Ovary (tissue), 10 donors: ENCODE measurements at regions of chr2 and their contacts with region 1.

Region 1: GRCh38 chr2:241466230-241466629 is 42.2 kb downstream of the STK25 start:
- DNase-seq: no peak
- H3K4me3 ChIP-seq: no peak overlapping the region
- H3K27ac ChIP-seq: no peak overlapping the region
- H3K4me1 ChIP-seq: no peaks in the 10 kb centered on the region
- H3K27me3 ChIP-seq: no peaks in the 10 kb centered on the region
- CTCF ChIP-seq: no peak
- EP300 ChIP-seq: no peak
- POLR2A ChIP-seq: no peak

Region 2: DNA sequence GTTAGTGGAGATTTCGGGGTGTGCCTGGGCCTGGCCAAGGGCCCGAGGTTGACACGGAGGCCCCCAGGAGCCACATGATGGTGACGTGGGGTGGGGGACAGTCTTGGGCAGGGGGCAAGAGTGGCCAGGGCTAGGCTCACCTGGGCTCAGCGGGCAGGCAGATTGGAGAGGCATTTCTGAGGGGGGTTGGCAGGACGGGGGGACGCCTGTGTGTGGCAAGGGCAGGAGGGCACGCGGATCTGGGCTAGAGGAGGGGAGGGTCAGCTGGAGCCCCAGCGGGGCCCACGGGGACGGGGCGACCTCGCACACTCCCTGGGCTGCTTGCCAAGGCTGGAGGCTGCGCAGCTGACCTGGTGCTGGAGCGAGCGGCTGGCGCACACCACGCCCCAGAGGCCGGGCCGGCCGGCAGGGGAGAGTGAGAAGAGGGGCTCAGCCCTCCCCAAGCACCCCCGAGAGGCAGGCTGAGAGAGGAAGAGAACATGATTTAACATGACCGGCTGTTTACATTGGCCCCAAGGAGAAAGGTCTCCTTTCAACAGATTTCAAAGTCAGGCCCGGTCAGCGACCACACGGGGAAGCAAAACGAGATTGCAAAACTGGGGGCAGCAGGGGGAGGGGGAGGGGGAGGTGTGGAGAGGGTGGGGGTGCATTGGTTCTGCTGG is 505.8 kb before region 1 on chr2:
- intact Hi-C with region 1: no loop called
- DNase-seq: peak; percentile 88 to 96 (median 94)
- H3K4me3 ChIP-seq: no peak overlapping the region
- H3K27ac ChIP-seq: peak overlapping the region; percentile 53 to 83
- H3K4me1 ChIP-seq: peaks cover 35% of the 10 kb centered on the region
- H3K27me3 ChIP-seq: no peaks in the 10 kb centered on the region
- CTCF ChIP-seq: peak in 1 of 3 donors; percentile 8
- EP300 ChIP-seq: no peak
- POLR2A ChIP-seq: no peak

Region 3: GRCh38 chr2:241496904-241497877 is 31.0 kb after region 1 on chr2:
- intact Hi-C with region 1: loop called in 1 of 4 experiments (anchors 1 kb)
- DNase-seq: no peak
- H3K4me3 ChIP-seq: no peak overlapping the region
- H3K27ac ChIP-seq: no peak overlapping the region
- H3K4me1 ChIP-seq: no peaks in the 10 kb centered on the region
- H3K27me3 ChIP-seq: no peaks in the 10 kb centered on the region
- CTCF ChIP-seq: no peak
- EP300 ChIP-seq: no peak
- POLR2A ChIP-seq: no peak